ENCODE measurements at regions of chrX and their contacts with region 1.

Region 1: DNA sequence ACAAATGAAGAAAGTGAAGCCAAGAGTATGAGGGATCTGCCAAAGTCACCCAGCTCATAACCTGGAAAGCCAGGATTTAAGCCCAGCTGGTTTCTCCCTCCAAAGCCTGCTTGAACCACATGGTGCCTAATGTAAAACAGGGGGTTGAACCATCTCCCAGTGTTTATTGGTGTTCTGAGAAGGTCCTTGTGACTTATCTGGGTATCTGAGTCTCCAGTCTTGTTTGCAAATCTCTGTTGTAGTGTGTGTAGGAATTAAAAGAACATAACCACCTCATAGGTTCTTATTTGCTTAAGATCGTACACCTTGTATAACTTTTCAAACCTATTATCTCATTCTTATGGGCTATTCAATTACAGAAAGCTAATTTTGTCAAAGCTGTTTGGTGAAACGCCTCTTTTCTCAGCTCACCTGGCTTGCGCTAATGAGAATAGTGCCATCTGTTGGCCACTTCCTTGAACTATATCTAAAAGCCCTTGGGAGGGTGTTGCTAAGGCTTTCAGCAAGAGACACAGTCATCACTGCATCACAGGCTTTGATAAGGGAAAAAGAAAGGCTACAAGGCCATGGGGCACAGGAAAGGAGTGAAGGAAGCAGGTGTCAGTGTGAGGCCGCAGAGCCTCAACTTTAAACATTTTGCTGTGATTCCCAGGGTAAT is 34.0 kb downstream of the ETDB start:
- DNase-seq: no peak
- H3K4me3 ChIP-seq: no peak overlapping the region
- H3K27ac ChIP-seq: no peak overlapping the region
- H3K4me1 ChIP-seq: no peaks in the 10 kb centered on the region
- H3K27me3 ChIP-seq: no peaks in the 10 kb centered on the region
- CTCF ChIP-seq: peak; percentile 26 to 61 (median 56)

Region 2: DNA sequence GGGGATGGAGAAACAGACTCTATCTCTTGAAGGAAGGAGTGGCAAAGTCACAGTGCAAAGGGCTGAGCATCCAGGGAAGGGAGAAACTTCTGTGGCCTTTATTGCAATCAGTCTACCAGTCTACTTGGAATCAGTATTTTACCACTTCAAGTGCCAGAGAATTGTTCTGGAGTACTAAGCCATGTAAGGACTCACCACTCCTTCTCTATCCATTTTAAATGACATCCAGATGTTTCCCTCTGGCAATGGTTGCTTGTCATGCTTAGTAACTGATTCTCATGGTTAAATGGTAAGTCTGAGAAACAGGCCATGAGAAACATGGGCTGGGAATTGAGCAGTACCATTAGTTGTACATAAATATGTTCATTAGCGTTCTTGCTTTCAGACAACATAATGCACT is 116.6 kb before region 1 on chrX:
- intact Hi-C with region 1: loop called (anchors 5 kb)
- DNase-seq: peak in 1 of 2 donors; percentile 4
- H3K4me3 ChIP-seq: no peak overlapping the region
- H3K27ac ChIP-seq: no peak overlapping the region
- H3K4me1 ChIP-seq: no peaks in the 10 kb centered on the region
- H3K27me3 ChIP-seq: no peaks in the 10 kb centered on the region
- CTCF ChIP-seq: no peak